Activated B cell treated with CpG ODN at 0.5 μM for 24 hours (primary cell): ENCODE measurements at regions of chr13 and their contacts with region 1.

Region 1: DNA sequence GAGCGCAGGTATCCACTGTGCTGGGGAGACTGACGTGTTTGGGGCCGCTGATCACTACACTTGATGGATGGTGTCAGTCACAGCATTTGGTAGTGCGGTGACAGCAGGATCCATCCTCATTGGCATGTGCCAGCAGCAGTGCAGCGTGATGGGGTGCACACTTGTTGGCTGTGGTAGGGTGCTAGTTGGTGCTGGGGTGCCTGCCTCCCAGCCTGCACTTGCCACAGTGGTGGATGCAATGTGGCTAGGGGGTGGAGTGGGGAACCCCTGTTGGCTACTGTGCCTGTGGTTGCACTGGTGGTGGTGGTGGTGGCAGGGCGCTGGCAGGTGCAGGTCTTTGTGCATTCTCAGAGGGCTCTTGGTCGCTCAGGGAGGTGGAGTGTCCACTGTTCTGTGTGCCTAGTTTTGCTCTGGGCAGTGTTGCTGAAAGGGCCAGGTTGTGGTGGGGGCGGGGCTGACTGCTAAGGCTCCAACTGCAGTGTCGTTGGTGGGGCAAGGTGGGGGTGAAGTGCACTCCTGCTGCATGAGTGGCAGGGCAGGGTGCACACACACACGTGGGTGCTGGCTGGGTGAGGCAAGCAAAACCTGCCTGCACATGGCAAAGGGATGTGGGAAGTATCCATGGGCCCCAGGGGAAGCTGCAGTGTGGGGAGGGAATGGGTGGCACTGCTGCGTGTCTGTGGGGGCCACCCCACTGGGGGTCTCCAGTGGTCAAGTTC is 84.8 kb downstream of the ZMYM2 start:
- DNase-seq: no peak
- ATAC-seq: no peak
- H3K4me3 Mint-ChIP-seq: no peak overlapping the region
- H3K27ac Mint-ChIP-seq: no peak overlapping the region
- H3K4me1 Mint-ChIP-seq: peaks cover 2% of the 10 kb centered on the region
- H3K27me3 Mint-ChIP-seq: no peaks in the 10 kb centered on the region
- CTCF ChIP-seq: no peak

Region 2: DNA sequence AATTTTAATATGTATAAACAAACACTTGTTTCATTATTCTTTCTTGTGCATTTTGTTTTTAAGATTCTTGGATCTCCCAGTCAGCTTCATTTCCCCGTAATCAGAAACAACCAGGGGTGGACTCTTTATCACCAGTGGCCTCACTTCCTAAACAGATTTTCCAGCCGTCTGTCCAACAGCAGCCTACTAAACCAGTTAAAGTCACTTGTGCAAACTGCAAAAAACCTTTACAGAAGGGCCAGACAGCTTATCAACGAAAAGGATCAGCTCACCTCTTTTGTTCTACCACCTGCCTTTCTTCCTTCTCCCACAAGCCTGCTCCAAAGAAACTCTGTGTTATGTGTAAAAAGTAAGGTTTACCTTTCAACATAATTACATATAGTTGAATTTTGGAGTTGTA is 40.6 kb before region 1 on chr13:
- CTCF ChIA-PET with region 1: no interaction called
- POLR2A ChIA-PET with region 1: no interaction called
- intact Hi-C with region 1: loop called (anchors 5 kb)
- DNase-seq: no peak
- ATAC-seq: no peak
- H3K4me3 Mint-ChIP-seq: no peak overlapping the region
- H3K27ac Mint-ChIP-seq: no peak overlapping the region
- H3K4me1 Mint-ChIP-seq: peaks cover 5% of the 10 kb centered on the region
- H3K27me3 Mint-ChIP-seq: no peaks in the 10 kb centered on the region
- CTCF ChIP-seq: no peak